Activated CD4-positive, alpha-beta memory T cell treated with anti-CD3 and anti-CD28 coated beads, Interleukin-2, amount 10 ng/mL, durations not matched to agents 7 days and 5 days (primary cell): ENCODE measurements at regions of chr1 and their contacts with region 1.

Region 1: GRCh38 chr1:32716312-32717148 is 14.0 kb upstream of the SYNC start:
- DNase-seq: peak; percentile 73
- H3K4me3 Mint-ChIP-seq: no peak overlapping the region
- H3K27ac Mint-ChIP-seq: no peak overlapping the region
- H3K4me1 Mint-ChIP-seq: peaks cover 14% of the 10 kb centered on the region
- H3K27me3 Mint-ChIP-seq: peaks cover 6% of the 10 kb centered on the region

Region 2: GRCh38 chr1:32695098-32695904 is 21.2 kb before region 1 on chr1:
- CTCF ChIA-PET with region 1: interaction called, 13 read pairs
- POLR2A ChIA-PET with region 1: no interaction called
- DNase-seq: no peak
- H3K4me3 Mint-ChIP-seq: no peak overlapping the region
- H3K27ac Mint-ChIP-seq: no peak overlapping the region
- H3K4me1 Mint-ChIP-seq: peaks cover 10% of the 10 kb centered on the region
- H3K27me3 Mint-ChIP-seq: peaks cover 3% of the 10 kb centered on the region

Region 3: GRCh38 chr1:32782086-32782485 is 65.6 kb after region 1 on chr1:
- CTCF ChIA-PET with region 1: interaction called, 157 read pairs
- POLR2A ChIA-PET with region 1: no interaction called
- DNase-seq: no peak
- H3K4me3 Mint-ChIP-seq: no peak overlapping the region
- H3K27ac Mint-ChIP-seq: peak overlapping the region; percentile 3
- H3K4me1 Mint-ChIP-seq: peaks cover 15% of the 10 kb centered on the region
- H3K27me3 Mint-ChIP-seq: no peaks in the 10 kb centered on the region

Region 4: GRCh38 chr1:32848354-32849063 is 132.0 kb after region 1 on chr1:
- CTCF ChIA-PET with region 1: interaction called, 11 read pairs
- POLR2A ChIA-PET with region 1: no interaction called
- DNase-seq: no peak
- H3K4me3 Mint-ChIP-seq: no peak overlapping the region
- H3K27ac Mint-ChIP-seq: no peak overlapping the region
- H3K4me1 Mint-ChIP-seq: peaks cover 3% of the 10 kb centered on the region
- H3K27me3 Mint-ChIP-seq: no peaks in the 10 kb centered on the region

Region 5: DNA sequence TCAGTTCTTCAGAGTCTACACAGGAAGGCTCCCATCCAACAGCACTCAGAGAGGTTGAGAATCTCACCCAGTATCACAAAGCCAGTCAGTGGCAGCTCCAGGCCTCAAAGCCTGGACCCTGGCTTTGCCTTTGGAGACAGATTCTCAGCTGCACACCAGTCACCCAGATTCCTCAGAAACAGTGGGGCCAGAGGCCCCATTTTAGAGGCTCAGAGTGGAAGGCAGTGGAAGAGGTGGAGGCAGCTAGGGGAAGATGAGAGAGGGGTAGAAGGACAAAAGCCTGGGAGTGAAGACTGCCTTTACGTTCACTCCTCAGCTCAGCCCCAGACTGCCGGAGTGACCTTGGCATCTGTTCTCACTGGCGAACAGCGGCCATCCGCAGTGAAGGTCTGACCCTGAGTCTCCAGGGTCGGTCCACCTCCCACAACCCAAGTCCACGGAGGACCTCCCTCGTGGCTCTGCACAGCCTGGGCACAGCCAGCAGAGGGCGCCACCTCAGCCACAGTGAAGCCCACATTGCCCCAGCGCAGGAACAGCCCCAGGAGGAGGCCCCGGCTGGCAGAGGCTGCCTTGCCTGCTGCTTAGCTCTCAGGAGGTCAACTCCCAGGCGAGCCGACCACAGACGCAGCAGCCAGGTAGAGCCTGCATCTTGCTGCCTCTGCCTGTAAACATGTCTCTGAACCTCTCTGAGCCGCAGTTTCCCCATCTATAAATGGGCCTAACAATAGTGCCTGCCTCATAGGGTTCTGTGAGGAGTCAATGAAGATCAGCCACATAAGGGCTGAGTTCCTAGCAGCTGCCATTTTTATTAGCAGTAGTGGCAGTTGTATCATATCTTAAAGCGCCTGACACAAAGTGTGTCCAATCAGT is 160.0 kb after region 1 on chr1:
- CTCF ChIA-PET with region 1: interaction called, 32 read pairs
- POLR2A ChIA-PET with region 1: no interaction called
- DNase-seq: peak; percentile 74
- H3K4me3 Mint-ChIP-seq: no peak overlapping the region
- H3K27ac Mint-ChIP-seq: no peak overlapping the region
- H3K4me1 Mint-ChIP-seq: peaks cover 9% of the 10 kb centered on the region
- H3K27me3 Mint-ChIP-seq: peaks cover 39% of the 10 kb centered on the region